MCF 10A (cell line): ENCODE measurements at regions of chr13 and their contacts with region 1.

Region 1: DNA sequence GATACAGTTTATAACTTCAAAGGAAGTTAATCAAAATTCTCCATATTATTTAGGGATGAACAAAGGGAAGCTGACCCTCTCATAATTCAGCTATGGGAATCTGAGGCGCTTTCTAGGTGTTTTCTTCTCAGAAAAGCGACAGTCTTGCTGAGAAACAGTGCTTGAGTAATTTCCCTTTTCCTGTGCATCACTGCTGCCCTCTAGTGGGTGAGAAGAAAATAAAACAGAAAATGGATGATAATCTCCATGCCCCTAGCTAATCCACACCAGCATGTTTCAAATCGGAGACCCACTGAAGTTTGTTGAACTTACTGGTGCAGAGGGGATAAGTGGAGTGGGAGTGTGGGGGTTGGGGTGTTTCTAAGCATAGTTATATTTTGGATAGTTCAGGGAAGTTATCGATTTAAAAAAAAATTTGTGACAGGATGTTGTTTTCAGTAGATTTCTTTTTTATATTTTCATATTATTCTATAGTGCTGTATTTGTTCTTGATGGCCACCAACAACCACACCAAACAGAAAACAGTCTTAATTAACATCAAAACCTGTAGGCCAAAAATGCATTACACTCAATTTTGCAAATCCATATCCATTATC is 21.4 kb downstream of the LCP1 start:
- DNase-seq: peak; percentile 70
- H3K4me3 Mint-ChIP-seq: no peak overlapping the region
- H3K27ac Mint-ChIP-seq: no peak overlapping the region
- H3K4me1 Mint-ChIP-seq: no peaks in the 10 kb centered on the region
- H3K27me3 Mint-ChIP-seq: peaks cover 54% of the 10 kb centered on the region
- CTCF ChIP-seq: peak; percentile 74

Region 2: DNA sequence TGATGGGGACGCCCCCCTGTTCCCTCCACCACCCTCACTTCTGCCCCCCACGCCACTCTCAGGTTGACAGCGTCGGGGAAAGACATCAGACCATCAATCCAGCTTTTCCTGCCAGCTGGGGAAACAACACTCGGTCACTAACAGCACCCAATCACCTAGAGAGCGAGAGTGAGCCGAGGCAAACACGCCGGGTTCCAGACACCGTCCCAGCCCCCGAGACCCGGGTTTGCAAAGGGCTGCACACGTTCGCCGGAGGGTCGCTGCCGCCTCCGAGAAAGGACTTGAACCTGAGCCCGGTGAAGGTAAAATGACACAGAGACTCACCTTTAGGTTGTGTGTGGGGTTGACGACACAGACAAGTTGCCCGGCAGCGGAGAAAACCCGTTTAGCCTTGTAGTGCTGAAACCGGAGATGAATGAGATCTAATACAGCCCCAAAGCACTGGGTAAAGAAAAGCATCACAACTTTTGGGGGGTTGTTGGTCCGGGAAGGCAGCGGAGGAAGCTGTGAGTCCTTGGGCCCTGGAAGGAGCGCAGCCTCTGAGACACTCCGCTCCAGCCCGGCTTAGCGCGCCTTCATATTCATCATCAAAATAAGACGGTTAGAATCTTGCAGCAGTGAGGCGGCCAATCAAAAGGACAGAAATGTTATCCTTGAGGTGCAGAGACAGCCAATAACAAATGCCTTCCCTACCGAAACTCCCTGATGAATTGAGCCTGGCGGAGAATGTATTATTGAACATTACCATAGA is 309.2 kb before region 1 on chr13 and contains the start of gene SIAH3:
- CTCF ChIA-PET with region 1: no interaction called
- POLR2A ChIA-PET with region 1: no interaction called
- intact Hi-C with region 1: no loop called
- DNase-seq: no peak
- H3K4me3 Mint-ChIP-seq: no peak within 1 kb of the TSS
- H3K27ac Mint-ChIP-seq: no peak within 1 kb of the TSS
- H3K4me1 Mint-ChIP-seq: no peaks in the 10 kb centered on the region
- H3K27me3 Mint-ChIP-seq: peaks cover 88% of the 10 kb centered on the region
- CTCF ChIP-seq: no peak
- total RNA-seq, gene SIAH3: not detected in 2 replicates

Region 3: DNA sequence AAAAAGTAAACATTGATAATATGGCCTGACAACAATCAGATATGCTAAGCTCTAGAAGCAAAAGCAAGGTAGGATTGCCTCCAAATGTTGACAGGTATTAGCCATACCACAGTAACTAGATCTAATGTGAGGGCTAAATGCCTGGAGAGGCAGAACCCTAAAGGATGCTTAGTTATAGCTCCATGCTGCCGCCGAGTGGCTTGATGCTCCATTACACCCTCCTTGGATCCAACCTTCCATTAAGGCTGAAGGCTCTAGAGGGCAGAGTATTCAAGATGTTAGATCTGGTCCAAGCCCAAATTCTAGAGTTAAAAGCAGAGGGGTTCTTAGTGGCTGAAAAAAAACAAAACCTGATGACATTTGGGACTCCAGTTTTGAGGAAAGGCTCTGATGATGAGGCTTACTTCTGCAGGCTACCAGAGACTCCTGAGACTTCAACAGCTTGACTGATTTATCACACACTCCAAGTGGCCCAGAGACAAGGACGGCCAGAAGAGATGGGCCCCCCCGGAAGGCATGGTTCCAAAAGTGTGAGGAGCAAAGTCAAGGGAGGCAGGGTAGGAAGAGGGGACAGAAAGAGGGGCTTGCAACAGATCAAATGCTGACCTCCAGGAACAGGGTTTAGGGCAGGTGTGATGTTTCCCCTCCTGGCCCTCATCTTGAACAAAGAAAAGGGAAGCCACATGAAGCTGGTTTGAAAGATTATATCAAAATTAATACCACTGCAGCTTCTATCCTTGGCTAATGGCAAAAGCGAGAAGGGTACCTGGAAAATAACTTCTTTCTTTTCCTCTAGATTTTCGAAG is 33.8 kb before region 1 on chr13:
- CTCF ChIA-PET with region 1: interaction called, 15 read pairs
- POLR2A ChIA-PET with region 1: no interaction called
- intact Hi-C with region 1: no loop called
- DNase-seq: peak; percentile 87
- H3K4me3 Mint-ChIP-seq: no peak overlapping the region
- H3K27ac Mint-ChIP-seq: no peak overlapping the region
- H3K4me1 Mint-ChIP-seq: peaks cover 6% of the 10 kb centered on the region
- H3K27me3 Mint-ChIP-seq: peaks cover 29% of the 10 kb centered on the region
- CTCF ChIP-seq: peak; percentile 88

Region 4: GRCh38 chr13:46146899-46147298 is 13.7 kb before region 1 on chr13:
- CTCF ChIA-PET with region 1: interaction called, 19 read pairs
- POLR2A ChIA-PET with region 1: interaction called, 3 read pairs
- intact Hi-C with region 1: no loop called
- DNase-seq: no peak
- H3K4me3 Mint-ChIP-seq: no peak overlapping the region
- H3K27ac Mint-ChIP-seq: no peak overlapping the region
- H3K4me1 Mint-ChIP-seq: no peaks in the 10 kb centered on the region
- H3K27me3 Mint-ChIP-seq: peaks cover 35% of the 10 kb centered on the region
- CTCF ChIP-seq: peak; percentile 24

Region 5: DNA sequence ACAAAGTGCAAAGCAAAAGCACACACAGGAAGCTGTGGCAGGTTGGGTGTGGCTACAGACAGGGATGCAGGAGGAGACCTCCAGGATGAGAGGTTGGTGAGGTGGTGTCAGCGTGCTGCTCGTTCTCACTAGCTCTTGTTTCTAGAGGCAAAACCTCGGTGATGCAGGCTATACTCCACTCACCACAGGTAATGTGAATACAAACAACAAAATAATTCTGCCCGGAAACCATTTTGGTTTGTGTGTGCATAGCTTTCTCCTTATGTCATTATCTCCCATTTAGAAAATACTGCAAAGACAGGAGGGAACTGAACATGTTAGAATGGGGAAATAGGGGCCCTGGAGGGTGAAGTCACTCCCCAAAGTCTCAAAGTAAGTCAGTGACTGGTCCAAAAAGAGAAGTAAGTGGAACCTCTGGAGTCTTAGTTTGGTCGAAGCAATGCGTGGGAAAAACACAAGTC is 12.0 kb after region 1 on chr13:
- CTCF ChIA-PET with region 1: interaction called, 24 read pairs
- POLR2A ChIA-PET with region 1: no interaction called
- intact Hi-C with region 1: no loop called
- DNase-seq: no peak
- H3K4me3 Mint-ChIP-seq: no peak overlapping the region
- H3K27ac Mint-ChIP-seq: peak overlapping the region; percentile 47
- H3K4me1 Mint-ChIP-seq: no peaks in the 10 kb centered on the region
- H3K27me3 Mint-ChIP-seq: peaks cover 65% of the 10 kb centered on the region
- CTCF ChIP-seq: no peak

Region 6: DNA sequence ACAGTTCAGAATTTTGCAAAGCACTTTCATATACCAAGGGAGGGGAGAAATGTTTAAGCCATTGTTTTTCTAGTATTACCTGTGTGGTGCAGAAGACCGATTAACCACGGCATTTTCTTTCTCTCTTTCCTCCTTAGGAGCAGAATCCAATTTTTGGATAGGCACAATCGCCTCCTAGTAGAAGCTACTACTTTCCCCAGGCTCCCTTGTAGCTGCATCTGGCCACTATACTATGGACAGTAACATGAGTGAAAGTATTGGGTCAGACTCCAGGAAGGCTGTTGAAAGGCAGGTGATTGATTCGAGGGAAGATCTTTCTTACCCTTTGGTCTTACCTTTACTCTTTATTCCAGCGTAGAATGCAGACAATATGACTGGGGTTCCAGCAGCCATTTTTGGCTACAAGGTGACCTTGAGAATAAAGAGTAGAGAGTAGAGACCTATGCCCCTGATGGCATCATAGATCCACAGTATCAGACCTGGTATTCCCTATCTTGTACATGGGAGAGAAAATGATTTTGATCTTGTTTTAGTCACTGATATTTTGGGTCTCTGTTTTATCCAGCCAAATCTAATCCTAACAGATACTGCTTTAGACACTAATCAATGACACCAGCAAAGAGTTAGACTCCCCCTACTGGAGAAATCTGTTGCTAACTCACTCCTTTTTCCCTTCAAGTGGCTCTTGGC is 128.1 kb after region 1 on chr13:
- CTCF ChIA-PET with region 1: interaction called, 8 read pairs
- POLR2A ChIA-PET with region 1: no interaction called
- intact Hi-C with region 1: loop called (anchors 1 kb)
- DNase-seq: peak; percentile 65
- H3K4me3 Mint-ChIP-seq: no peak overlapping the region
- H3K27ac Mint-ChIP-seq: no peak overlapping the region
- H3K4me1 Mint-ChIP-seq: peaks cover 5% of the 10 kb centered on the region
- H3K27me3 Mint-ChIP-seq: no peaks in the 10 kb centered on the region
- CTCF ChIP-seq: peak; percentile 54